ENCODE measurements at regions of chr11 and their contacts with region 1.

Region 1: GRCh38 chr11:75004215-75004614 is 15.5 kb downstream of the NEU3 start:
- DNase-seq: no peak
- H3K4me3 ChIP-seq: no peak overlapping the region
- H3K27ac ChIP-seq: no peak overlapping the region
- H3K4me1 ChIP-seq: no peaks in the 10 kb centered on the region
- H3K27me3 ChIP-seq: no peaks in the 10 kb centered on the region
- CTCF ChIP-seq: no peak
- POLR2A ChIP-seq: no peak

Region 2: DNA sequence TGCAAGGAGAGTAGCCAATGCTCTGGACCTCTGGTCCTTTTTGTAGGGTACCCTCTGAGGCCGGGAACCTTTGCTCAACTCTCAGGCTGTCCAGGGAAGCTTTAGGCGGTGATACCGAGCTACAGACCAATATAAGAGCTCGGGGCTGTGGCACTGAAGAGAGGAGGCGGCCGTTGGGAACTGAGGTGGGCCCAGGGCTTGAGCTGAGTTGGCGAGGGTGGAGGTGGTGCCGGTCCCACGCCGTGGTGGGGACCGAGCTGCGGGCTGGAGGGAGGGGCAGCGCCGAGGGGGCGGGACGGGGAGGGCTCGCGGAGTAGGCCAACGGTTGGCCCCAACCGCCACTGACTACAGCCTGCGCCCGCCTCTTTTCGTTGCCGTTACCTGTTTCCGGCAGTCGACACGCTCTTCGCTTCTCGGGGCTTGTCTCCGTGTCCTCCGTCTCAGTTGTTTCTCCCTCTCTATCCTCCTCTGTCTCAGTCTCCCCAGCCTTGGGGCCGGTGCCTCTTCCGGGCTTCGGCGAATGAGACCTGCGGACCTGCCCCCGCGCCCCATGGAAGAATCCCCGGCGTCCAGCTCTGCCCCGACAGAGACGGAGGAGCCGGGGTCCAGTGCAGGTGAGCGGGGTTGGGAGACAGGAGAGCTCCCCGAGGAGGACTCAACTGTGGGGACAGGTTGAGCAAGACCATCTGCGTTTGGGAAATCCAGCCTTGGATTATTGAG is 15.5 kb before region 1 on chr11 and contains the start of gene NEU3:
- CTCF ChIA-PET with region 1: interaction called, 5 read pairs
- POLR2A ChIA-PET with region 1: interaction called, 11 read pairs
- dilution Hi-C with region 1: no loop called
- intact Hi-C with region 1: no loop called
- DNase-seq: peak; percentile 82
- H3K4me3 ChIP-seq: peak within 1 kb of the TSS; percentile 52 to 74 (median 62)
- H3K27ac ChIP-seq: peak within 1 kb of the TSS; percentile 25
- H3K4me1 ChIP-seq: peaks cover 9% of the 10 kb centered on the region
- H3K27me3 ChIP-seq: no peaks in the 10 kb centered on the region
- CTCF ChIP-seq: no peak
- POLR2A ChIP-seq: peak; percentile 81
- total RNA-seq, gene NEU3: 7.0 and 7.6 TPM in 2 replicates